HCT116 (cell line): ENCODE measurements at regions of chr4 and their contacts with region 1.

Region 1: DNA sequence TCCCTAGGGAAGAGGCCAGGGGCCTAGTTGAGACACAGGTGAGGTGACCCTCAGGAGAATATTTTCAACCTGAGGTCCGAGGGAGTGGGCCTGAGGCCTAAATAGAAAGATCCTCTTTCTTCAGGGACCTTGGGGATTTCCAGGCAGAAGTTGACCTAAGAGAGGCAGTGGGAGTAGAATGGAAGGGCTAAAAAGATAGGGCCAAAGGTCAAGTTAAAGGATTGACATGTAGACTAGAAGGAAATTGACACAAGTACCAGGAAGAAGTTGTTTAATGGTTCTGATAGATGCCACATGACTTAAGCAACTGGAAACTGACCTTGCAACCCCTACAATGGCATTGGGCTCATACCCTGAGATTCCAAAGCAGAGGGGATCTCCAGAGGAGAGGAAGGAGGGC is 76.9 kb downstream of the SHROOM3 start:
- DNase-seq: no peak
- ATAC-seq: no peak
- H3K4me3 ChIP-seq: no peak overlapping the region
- H3K27ac ChIP-seq: no peak overlapping the region
- H3K4me1 ChIP-seq: no peaks in the 10 kb centered on the region
- H3K27me3 ChIP-seq: no peaks in the 10 kb centered on the region
- CTCF ChIP-seq: no peak
- POLR2A ChIP-seq: no peak
- RAD21 ChIP-seq: no peak

Region 2: DNA sequence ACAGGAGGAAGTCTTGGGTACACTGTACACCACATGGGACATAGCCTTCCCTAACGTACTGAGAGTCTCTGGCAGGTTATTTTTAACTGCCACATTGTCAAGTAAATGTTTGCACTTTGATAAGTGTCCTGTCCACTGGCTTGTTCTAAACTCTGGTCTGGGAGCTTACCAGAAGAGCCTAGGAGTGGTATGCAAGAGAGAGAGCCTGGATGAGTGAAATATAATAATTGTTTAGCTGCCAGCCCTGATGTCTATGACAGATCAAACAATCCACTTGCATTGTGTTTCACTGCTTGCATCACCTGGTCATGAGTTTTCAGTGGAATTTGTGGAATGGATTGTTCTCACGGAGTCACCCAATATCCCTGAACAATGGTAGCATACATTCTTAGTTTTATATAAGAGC is 14.6 kb after region 1 on chr4:
- CTCF ChIA-PET with region 1: no interaction called
- POLR2A ChIA-PET with region 1: no interaction called
- RAD21 ChIA-PET with region 1: no interaction called
- intact Hi-C with region 1: no loop called
- DNase-seq: no peak
- ATAC-seq: no peak
- H3K4me3 ChIP-seq: no peak overlapping the region
- H3K27ac ChIP-seq: no peak overlapping the region
- H3K4me1 ChIP-seq: no peaks in the 10 kb centered on the region
- H3K27me3 ChIP-seq: no peaks in the 10 kb centered on the region
- CTCF ChIP-seq: no peak
- POLR2A ChIP-seq: no peak
- RAD21 ChIP-seq: no peak

Region 3: DNA sequence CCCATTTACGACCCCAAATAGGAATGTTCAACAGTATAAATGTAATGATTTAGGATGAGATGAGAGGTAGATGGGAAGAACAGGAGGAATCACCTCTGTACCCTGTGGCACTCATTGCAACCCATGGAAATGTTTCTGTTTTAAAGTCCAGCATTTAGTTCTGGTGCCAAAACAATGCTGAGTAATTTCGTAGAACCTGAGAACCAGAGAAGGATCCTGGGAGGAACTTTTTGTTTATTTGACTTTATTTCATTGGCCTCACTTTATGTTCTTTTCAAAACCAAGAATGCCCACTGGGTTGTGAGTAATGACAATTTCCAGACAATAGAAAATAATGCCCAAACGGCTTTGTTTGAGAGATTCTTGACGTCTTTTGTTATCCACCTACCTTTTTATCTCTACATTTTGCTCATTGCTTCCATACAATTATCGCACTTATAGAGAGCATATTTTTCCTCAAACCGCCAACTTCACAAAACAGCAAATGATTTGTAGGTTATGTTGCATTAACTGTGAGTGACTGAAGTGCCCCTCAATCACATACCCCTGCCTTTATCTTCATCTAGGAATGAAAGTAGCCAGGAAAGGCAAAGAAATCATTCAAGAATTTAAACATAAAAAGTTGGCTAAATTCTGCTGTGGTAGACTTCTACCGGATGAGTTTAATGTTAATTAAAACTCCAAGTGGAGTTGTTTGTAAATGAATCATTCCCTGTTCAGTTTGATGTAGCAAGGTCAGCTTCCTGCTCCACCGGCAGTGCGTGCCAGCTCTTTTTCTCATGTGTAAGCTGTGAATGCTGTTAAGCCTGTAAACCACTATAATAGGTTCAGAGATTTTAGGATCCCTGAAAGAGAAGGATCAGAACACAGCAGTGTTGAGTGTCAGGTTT is 34.6 kb after region 1 on chr4:
- CTCF ChIA-PET with region 1: no interaction called
- POLR2A ChIA-PET with region 1: no interaction called
- RAD21 ChIA-PET with region 1: no interaction called
- intact Hi-C with region 1: no loop called
- DNase-seq: no peak
- ATAC-seq: no peak
- H3K4me3 ChIP-seq: no peak overlapping the region
- H3K27ac ChIP-seq: no peak overlapping the region
- H3K4me1 ChIP-seq: peaks cover 0 to 9% of the 10 kb centered on the region in 2 experiments; a peak in 1 of 4 replicates
- H3K27me3 ChIP-seq: no peaks in the 10 kb centered on the region
- CTCF ChIP-seq: no peak
- POLR2A ChIP-seq: no peak
- RAD21 ChIP-seq: no peak

Region 4: GRCh38 chr4:76748649-76749048 is 236.7 kb after region 1 on chr4:
- CTCF ChIA-PET with region 1: no interaction called
- POLR2A ChIA-PET with region 1: no interaction called
- RAD21 ChIA-PET with region 1: no interaction called
- intact Hi-C with region 1: loop called (anchors 1 kb)
- DNase-seq: no peak
- ATAC-seq: peak; percentile 55
- H3K4me3 ChIP-seq: no peak overlapping the region
- H3K27ac ChIP-seq: no peak overlapping the region
- H3K4me1 ChIP-seq: peaks cover 12 to 30% of the 10 kb centered on the region in 2 experiments
- H3K27me3 ChIP-seq: no peaks in the 10 kb centered on the region
- CTCF ChIP-seq: peak; percentile 15 to 62 (median 56); a peak in 3 of 6 replicates
- POLR2A ChIP-seq: no peak
- RAD21 ChIP-seq: peak; percentile 82

Region 5: DNA sequence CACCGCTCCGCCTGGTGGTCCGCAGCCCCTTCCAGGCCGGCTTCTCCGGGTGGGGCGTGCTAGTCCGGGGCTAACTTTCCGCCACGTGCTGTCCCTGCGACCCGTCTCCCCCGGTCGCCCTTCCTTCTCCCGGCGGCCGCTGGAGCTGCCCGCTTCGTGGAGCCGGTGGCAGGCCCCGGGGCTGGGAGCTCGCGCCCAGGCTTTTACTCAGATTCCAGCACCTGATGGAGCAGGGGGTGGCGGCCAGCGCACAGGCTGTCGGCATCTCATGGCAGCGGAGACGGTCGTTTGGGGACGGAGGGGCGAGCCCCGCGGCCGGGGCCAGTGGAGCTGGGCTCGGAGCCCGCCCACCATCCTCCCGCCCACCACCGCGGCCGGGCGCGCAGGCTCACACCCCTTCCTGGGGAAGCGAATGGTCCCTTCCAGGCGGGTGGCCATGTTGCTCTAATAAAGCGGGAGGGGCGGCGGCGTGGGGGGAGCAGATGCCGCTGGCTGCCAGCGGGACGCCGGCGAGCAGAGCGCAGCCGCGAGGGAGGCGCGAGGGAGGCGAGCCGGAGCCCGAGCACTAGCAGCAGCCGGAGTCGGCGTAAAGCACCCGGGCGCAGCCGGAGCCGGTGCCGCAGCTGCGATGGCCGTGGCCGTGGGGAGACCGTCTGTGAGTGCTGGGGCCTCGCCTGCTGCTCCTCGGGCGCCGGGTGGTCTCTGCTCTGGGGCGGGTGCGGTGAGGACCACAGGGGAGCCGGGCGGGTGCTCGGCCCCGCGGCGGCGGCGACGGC is 437.5 kb after region 1 on chr4 and contains the start of gene SEPTIN11:
- CTCF ChIA-PET with region 1: no interaction called
- POLR2A ChIA-PET with region 1: no interaction called
- RAD21 ChIA-PET with region 1: no interaction called
- intact Hi-C with region 1: loop called (anchors 2 kb)
- DNase-seq: peak; percentile 80
- ATAC-seq: peak; percentile 81
- H3K4me3 ChIP-seq: peak within 1 kb of the TSS; percentile 85 to 88
- H3K27ac ChIP-seq: peak within 1 kb of the TSS; percentile 89
- H3K4me1 ChIP-seq: peaks cover 15 to 22% of the 10 kb centered on the region in 2 experiments; a peak in 3 of 4 replicates
- H3K27me3 ChIP-seq: no peaks in the 10 kb centered on the region
- CTCF ChIP-seq: no peak
- POLR2A ChIP-seq: peak; percentile 81
- RAD21 ChIP-seq: no peak
- total RNA-seq, gene SEPTIN11: 94.4 TPM

Region 6: DNA sequence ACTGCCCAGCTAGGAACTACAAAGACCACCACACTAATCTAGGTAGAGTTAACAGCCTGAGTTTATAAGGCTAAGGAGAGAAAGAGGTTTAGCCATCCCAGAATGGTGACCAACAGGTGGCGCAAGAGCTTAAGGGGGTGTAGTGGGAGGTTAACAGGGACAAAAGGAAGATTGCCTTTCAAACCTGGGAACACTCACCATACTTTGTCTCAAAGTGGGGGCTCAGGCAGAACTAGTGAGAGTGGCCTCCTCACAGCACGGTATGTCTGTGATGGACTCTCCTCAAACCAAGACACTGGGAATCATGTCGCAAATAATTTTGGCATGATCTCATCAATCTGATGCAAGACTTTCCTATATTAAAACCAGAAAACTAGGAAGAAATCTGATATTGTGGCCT is 540.4 kb after region 1 on chr4:
- CTCF ChIA-PET with region 1: no interaction called
- POLR2A ChIA-PET with region 1: no interaction called
- RAD21 ChIA-PET with region 1: no interaction called
- intact Hi-C with region 1: no loop called
- DNase-seq: peak; percentile 48
- ATAC-seq: peak; percentile 81
- H3K4me3 ChIP-seq: no peak overlapping the region
- H3K27ac ChIP-seq: no peak overlapping the region
- H3K4me1 ChIP-seq: peaks cover 6 to 12% of the 10 kb centered on the region in 2 experiments; a peak in 3 of 4 replicates
- H3K27me3 ChIP-seq: no peaks in the 10 kb centered on the region
- CTCF ChIP-seq: peak; percentile 55 to 77 (median 76); a peak in 5 of 6 replicates
- POLR2A ChIP-seq: no peak
- RAD21 ChIP-seq: peak; percentile 61

Region 7: GRCh38 chr4:77203380-77204197 is 691.6 kb after region 1 on chr4:
- CTCF ChIA-PET with region 1: interaction called, 5 read pairs
- POLR2A ChIA-PET with region 1: interaction called, 3 read pairs
- RAD21 ChIA-PET with region 1: interaction called in 1 of 2 experiments, 3 read pairs
- intact Hi-C with region 1: loop called (anchors 1 kb)
- DNase-seq: peak; percentile 75
- ATAC-seq: peak; percentile 93
- H3K4me3 ChIP-seq: no peak overlapping the region
- H3K27ac ChIP-seq: no peak overlapping the region
- H3K4me1 ChIP-seq: peaks cover 0 to 12% of the 10 kb centered on the region in 2 experiments; a peak in 1 of 4 replicates
- H3K27me3 ChIP-seq: no peaks in the 10 kb centered on the region
- CTCF ChIP-seq: peak; percentile 76 to 84 (median 84)
- POLR2A ChIP-seq: no peak
- RAD21 ChIP-seq: peak; percentile 95